Activated B cell treated with CpG ODN at 0.5 μM for 24 hours (primary cell): ENCODE measurements at regions of chr17 and their contacts with region 1.

Region 1: DNA sequence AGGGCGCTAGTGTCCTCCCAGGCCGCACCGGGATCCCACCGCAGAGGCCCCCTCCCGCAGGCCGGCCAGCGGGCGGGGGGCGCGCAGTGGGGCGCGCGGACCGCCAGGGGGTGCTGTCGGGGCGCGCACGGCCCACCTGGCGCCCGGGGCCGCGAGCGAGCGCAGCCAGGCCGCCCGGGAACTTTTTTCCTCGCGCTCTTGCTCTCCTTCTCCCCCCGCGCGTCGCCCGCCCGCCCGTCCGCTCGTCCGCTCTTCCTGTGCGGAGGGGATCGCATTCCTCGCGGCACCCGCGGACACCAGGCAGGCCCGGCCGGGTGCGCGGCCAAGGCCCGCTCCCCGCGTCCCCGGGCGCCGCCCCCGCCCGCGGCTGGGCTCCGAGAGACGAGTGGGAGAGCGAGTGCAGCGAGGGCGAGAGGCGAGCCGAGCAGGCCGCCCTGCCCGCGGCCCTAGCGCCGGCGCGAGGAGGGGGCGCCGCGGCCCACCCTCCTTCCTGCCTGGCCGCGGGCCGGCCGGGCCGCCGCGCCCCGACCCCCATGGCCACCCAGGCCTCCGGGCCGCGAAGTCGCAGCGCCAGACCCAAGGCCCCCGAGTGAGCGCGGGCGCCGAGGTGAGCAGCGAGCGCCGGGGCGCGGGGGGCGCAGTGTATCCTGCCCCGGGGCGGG is at the start of gene RAI1:
- DNase-seq: peak; percentile 84
- ATAC-seq: peak; percentile 63
- H3K4me3 Mint-ChIP-seq: peak within 1 kb of the TSS; percentile 91
- H3K27ac Mint-ChIP-seq: peak within 1 kb of the TSS; percentile 81
- H3K4me1 Mint-ChIP-seq: peaks cover 24% of the 10 kb centered on the region
- H3K27me3 Mint-ChIP-seq: no peaks in the 10 kb centered on the region
- CTCF ChIP-seq: no peak
- total RNA-seq, gene RAI1: 26.7 and 31.2 TPM in 2 replicates

Region 2: GRCh38 chr17:17729620-17730249 is 48.4 kb after region 1 on chr17:
- CTCF ChIA-PET with region 1: interaction called, 3 read pairs
- POLR2A ChIA-PET with region 1: interaction called, 4 read pairs
- intact Hi-C with region 1: loop called (anchors 1 kb)
- DNase-seq: no peak
- ATAC-seq: peak; percentile 93
- H3K4me3 Mint-ChIP-seq: no peak overlapping the region
- H3K27ac Mint-ChIP-seq: no peak overlapping the region
- H3K4me1 Mint-ChIP-seq: peaks cover 16% of the 10 kb centered on the region
- H3K27me3 Mint-ChIP-seq: no peaks in the 10 kb centered on the region
- CTCF ChIP-seq: no peak

Region 3: GRCh38 chr17:17812211-17813057 is 131.1 kb after region 1 on chr17:
- CTCF ChIA-PET with region 1: interaction called, 9 read pairs
- POLR2A ChIA-PET with region 1: interaction called, 4 read pairs
- intact Hi-C with region 1: loop called (anchors 1 kb)
- DNase-seq: peak; percentile 81
- ATAC-seq: peak; percentile 82
- H3K4me3 Mint-ChIP-seq: no peak overlapping the region
- H3K27ac Mint-ChIP-seq: no peak overlapping the region
- H3K4me1 Mint-ChIP-seq: peaks cover 11% of the 10 kb centered on the region
- H3K27me3 Mint-ChIP-seq: no peaks in the 10 kb centered on the region
- CTCF ChIP-seq: peak; percentile 70

Region 4: DNA sequence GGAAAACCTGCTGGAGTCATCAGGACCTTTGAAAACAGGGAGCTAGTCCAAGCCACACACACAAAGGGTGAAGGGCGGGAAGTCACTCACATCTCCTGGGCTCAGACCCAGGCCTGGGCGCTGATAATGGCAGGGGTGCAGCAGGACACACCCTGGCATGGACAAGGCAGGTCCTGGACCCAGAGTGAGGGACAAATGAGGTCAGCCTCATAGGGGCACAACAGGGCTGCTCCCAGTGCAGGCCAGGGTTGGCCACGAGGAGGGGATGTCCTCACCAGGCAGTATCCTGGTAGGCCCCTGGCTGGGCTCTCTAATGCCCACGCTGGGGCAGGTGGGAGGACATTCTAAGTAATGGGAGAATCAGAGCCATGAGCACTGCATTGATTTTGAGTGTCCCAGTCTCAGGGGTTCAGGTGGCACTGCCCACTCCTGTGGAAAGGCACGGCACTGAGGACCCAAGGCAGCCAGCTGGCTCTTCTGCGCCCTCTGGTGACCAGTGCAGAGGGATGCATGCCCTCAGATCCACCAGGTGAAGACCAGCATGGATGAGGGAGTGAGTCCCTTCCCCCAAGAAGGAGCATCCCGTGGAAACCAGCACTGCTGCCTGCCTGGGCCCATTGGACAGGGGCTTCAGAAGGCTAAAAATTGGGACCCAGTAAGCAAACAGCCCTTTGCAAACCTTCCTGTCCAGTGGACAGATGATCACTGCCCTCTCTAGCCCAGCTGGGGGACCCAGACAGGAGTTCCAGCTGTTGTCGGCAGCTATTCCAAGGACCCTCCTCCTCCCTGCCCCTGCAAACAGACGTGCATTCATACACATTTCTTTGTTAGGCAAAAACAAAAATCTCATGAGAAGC is 178.8 kb after region 1 on chr17:
- CTCF ChIA-PET with region 1: interaction called, 18 read pairs
- POLR2A ChIA-PET with region 1: interaction called, 17 read pairs
- intact Hi-C with region 1: loop called (anchors 1 kb)
- DNase-seq: peak; percentile 65
- ATAC-seq: peak; percentile 99
- H3K4me3 Mint-ChIP-seq: no peak overlapping the region
- H3K27ac Mint-ChIP-seq: no peak overlapping the region
- H3K4me1 Mint-ChIP-seq: no peaks in the 10 kb centered on the region
- H3K27me3 Mint-ChIP-seq: no peaks in the 10 kb centered on the region
- CTCF ChIP-seq: peak; percentile 84

Region 5: GRCh38 chr17:17972126-17972951 is 291.0 kb after region 1 on chr17 and contains the starts of genes DRC3 and TOM1L2:
- CTCF ChIA-PET with region 1: no interaction called
- POLR2A ChIA-PET with region 1: no interaction called
- intact Hi-C with region 1: loop called (anchors 1 kb)
- DNase-seq: peak; percentile 97
- ATAC-seq: peak; percentile 91
- H3K4me3 Mint-ChIP-seq: peak within 1 kb of the TSS; percentile 94
- H3K27ac Mint-ChIP-seq: peak within 1 kb of the TSS; percentile 87
- H3K4me1 Mint-ChIP-seq: peaks cover 22% of the 10 kb centered on the region
- H3K27me3 Mint-ChIP-seq: no peaks in the 10 kb centered on the region
- CTCF ChIP-seq: no peak
- total RNA-seq, gene DRC3: not detected in 2 replicates
- total RNA-seq, gene TOM1L2: 15.2 and 18.3 TPM in 2 replicates